ENCODE measurements at regions of chr19 and their contacts with region 1.

Region 1: GRCh38 chr19:37906869-37907734 is at the start of gene SIPA1L3:
- DNase-seq: peak; percentile 93 to 99 (median 96)

Region 2: GRCh38 chr19:37920591-37921450 is 13.7 kb after region 1 on chr19:
- intact Hi-C with region 1: no loop called
- DNase-seq: peak in 3 of 10 donors; percentile 64 to 74 (median 73)

Region 3: GRCh38 chr19:38004521-38005223 is 97.6 kb after region 1 on chr19:
- intact Hi-C with region 1: loop called (anchors 2 kb)
- DNase-seq: peak; percentile 77 to 98 (median 88)

Region 4: DNA sequence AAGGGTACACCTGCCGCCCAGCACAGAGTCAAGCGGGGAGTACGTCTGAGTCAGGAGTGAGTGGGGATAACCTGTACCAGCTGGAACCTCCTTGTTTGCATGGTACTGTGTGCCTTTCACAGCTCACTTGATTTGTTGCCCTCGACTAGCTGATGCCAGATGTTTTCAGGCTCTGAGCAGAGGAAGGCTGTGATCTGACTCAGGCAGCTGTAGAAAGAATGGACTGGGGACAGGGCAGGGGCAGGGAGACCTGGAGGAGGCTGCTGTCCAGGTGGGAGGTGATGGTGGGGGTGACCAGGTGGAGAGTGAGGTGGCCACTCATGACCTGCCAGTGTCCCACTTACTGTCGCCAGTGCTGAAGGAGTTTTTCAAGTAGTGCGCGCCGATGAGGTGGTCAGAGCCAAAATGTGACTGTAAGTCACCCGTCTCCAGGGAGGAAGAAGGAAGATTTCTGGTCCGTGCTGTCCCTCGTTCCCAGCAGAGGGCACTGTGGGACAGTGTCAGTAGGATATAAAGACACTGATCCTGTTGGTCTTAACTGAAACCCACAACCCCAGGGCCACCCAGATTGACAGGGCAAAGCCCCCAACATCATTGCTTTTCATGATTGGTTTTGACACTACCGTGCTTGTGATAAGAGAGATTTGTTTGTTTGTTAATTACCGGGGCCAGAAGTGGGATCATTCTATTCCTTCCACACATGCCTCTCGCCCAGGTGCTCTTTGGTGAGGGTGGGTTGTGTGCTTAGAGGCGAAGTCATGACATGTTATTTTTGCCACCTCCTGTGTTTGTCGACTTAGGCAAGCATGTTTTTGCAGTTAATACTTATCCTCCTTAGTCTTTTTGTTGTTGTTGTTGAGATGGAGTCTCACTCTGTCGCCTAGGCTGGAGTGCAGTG is 188.6 kb after region 1 on chr19:
- intact Hi-C with region 1: loop called (anchors 5 kb)
- DNase-seq: peak; percentile 53 to 97 (median 82)

Region 5: DNA sequence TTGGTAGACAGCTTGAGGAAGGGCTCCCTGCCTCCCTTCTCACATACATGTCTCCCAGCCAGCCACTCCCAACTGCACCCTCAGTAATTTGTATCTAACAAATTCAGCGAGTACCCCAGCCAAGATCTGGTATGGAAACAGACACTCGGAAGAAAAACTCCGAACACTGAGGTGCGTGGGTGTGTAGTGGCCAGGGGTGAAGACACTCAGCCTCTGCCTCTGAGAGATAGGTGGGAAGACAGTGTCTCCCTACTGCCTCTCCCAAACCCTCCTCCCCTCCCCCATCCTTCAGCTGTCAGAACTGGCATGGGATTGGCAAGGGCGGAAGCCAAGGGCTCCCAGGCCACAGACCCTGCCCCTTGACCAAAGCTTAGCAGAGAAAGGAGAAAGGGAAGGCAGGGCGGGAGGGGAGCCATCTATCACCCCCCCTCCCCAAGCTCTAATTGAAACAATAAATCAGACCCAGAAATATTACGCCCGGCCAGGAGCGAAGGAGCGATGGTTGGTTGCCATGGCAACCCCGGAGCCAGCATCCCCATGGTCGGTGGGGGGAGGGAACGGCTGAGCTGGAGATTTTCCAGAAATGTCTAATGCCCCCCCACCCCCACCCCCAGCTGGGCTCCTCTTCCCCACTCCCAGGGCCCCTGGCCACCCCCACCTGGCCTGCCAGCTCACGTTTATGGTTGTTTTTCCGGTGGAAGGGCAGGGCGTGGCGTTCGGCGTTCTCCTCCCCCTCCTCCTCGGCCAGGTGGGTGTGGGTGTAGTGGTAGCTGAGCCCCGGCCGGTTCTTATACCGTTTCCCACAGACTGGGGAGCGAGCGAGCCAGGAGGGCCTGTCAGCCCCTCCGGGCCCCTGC is 309.9 kb after region 1 on chr19:
- intact Hi-C with region 1: no loop called
- DNase-seq: no peak

Region 6: GRCh38 chr19:38229585-38230073 is 322.5 kb after region 1 on chr19:
- intact Hi-C with region 1: loop called (anchors 5 kb)
- DNase-seq: peak; percentile 85 to 99 (median 96)

Region 7: GRCh38 chr19:38335949-38336637 is 429.0 kb after region 1 on chr19:
- intact Hi-C with region 1: loop called (anchors 5 kb)
- DNase-seq: peak; percentile 92 to 99 (median 94)